Calu3 (cell line): ENCODE measurements at regions of chr17 and their contacts with region 1.

Region 1: GRCh38 chr17:41548844-41549595 is 20.9 kb upstream of the KRT19 start:
- DNase-seq: peak; percentile 99
- H3K4me3 Mint-ChIP-seq: peak overlapping the region; percentile 62
- H3K27ac Mint-ChIP-seq: peak overlapping the region; percentile 92
- H3K4me1 Mint-ChIP-seq: peaks cover 91% of the 10 kb centered on the region
- H3K27me3 Mint-ChIP-seq: no peaks in the 10 kb centered on the region
- CTCF ChIP-seq: peak; percentile 98

Region 2: DNA sequence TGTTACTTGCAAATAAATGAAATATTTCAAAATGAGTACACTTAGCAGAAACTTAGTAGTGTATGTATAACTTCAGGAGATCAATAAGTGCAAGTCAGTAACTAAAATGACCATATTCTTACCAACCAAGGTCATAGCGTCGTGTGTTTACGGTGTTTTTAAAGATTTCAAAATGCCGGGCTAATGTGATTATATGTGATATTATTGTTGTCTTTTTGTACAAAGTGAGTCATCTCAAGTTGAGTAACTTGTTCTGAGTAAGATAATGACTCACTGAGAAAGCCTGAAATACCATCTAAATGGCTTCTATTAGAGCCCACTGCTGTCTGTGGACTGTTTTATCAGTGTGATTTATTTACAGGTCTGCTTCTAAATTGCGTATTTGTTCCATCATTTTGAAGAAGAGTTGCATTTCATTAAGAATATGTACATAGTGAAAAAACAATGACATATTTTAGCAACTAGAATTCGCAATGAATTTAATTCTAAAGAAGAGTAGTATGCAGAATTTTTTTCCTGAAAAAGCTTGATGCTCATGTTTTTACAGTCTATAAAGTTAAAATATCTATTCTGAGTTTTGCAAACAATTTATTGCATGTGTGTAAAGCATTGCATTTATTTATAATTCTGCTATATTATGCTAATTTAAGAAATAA is 694.7 kb before region 1 on chr17:
- CTCF ChIA-PET with region 1: interaction called, 46 read pairs
- intact Hi-C with region 1: loop called (anchors 2 kb)
- DNase-seq: no peak
- H3K4me3 Mint-ChIP-seq: peak overlapping the region; percentile 33
- H3K27ac Mint-ChIP-seq: peak overlapping the region; percentile 86
- H3K4me1 Mint-ChIP-seq: peaks cover 85% of the 10 kb centered on the region
- H3K27me3 Mint-ChIP-seq: no peaks in the 10 kb centered on the region
- CTCF ChIP-seq: no peak

Region 3: GRCh38 chr17:41060052-41060604 is 488.9 kb before region 1 on chr17 and contains the start of gene KRTAP2-3:
- CTCF ChIA-PET with region 1: interaction called, 12 read pairs
- intact Hi-C with region 1: no loop called
- DNase-seq: peak; percentile 90
- H3K4me3 Mint-ChIP-seq: peak within 1 kb of the TSS; percentile 33
- H3K27ac Mint-ChIP-seq: peak within 1 kb of the TSS; percentile 88
- H3K4me1 Mint-ChIP-seq: peaks cover 54% of the 10 kb centered on the region
- H3K27me3 Mint-ChIP-seq: no peaks in the 10 kb centered on the region
- CTCF ChIP-seq: no peak
- total RNA-seq, gene KRTAP2-3: 9.4 and 18.2 TPM in 2 replicates

Region 4: GRCh38 chr17:41456208-41456607 is 92.8 kb before region 1 on chr17:
- CTCF ChIA-PET with region 1: interaction called, 12 read pairs
- intact Hi-C with region 1: no loop called
- DNase-seq: peak; percentile 56
- H3K4me3 Mint-ChIP-seq: no peak overlapping the region
- H3K27ac Mint-ChIP-seq: no peak overlapping the region
- H3K4me1 Mint-ChIP-seq: no peaks in the 10 kb centered on the region
- H3K27me3 Mint-ChIP-seq: no peaks in the 10 kb centered on the region
- CTCF ChIP-seq: peak; percentile 41

Region 5: DNA sequence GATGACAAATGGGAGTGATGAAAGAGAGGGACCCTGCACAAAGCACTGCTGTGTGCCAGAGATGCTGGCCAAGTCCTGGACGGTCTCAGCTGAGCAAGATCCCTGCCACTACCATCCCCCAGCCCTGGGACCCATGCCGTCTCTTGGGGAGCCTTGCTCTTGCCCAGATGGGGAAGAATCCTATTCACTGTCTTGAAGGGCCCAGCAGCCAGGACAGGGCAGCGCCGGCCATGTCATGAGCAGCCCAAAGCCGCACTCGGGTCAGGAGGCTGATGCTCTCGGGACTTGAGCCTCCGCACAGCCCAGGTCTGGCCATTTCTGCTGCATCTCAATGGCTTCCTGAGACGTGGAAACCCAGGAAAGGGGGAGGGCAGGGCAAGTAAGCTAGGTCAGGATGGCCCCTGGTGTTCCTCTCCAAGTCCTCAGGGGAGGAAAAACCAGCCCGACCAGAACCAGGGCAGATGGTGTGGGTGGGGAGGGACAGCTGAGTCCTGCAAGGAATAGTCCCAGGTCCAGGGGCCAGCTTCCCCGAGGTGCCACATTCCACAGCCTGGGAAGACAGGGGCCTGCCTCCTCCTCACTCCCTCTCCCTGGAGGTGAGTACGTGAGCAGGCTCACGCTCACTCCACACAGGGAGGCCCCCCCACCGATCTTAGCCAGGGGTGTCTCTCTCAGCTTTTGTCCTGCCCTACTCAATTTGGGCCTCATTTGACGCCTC is 13.1 kb before region 1 on chr17:
- CTCF ChIA-PET with region 1: interaction called, 471 read pairs
- intact Hi-C with region 1: loop called (anchors 2 kb)
- DNase-seq: peak; percentile 74
- H3K4me3 Mint-ChIP-seq: no peak overlapping the region
- H3K27ac Mint-ChIP-seq: peak overlapping the region; percentile 50
- H3K4me1 Mint-ChIP-seq: peaks cover 88% of the 10 kb centered on the region
- H3K27me3 Mint-ChIP-seq: no peaks in the 10 kb centered on the region
- CTCF ChIP-seq: no peak

Region 6: GRCh38 chr17:41585301-41586056 is 36.5 kb after region 1 on chr17:
- CTCF ChIA-PET with region 1: interaction called, 13 read pairs
- intact Hi-C with region 1: no loop called
- DNase-seq: no peak
- H3K4me3 Mint-ChIP-seq: no peak overlapping the region
- H3K27ac Mint-ChIP-seq: no peak overlapping the region
- H3K4me1 Mint-ChIP-seq: peaks cover 27% of the 10 kb centered on the region
- H3K27me3 Mint-ChIP-seq: peaks cover 15% of the 10 kb centered on the region
- CTCF ChIP-seq: no peak

Region 7: DNA sequence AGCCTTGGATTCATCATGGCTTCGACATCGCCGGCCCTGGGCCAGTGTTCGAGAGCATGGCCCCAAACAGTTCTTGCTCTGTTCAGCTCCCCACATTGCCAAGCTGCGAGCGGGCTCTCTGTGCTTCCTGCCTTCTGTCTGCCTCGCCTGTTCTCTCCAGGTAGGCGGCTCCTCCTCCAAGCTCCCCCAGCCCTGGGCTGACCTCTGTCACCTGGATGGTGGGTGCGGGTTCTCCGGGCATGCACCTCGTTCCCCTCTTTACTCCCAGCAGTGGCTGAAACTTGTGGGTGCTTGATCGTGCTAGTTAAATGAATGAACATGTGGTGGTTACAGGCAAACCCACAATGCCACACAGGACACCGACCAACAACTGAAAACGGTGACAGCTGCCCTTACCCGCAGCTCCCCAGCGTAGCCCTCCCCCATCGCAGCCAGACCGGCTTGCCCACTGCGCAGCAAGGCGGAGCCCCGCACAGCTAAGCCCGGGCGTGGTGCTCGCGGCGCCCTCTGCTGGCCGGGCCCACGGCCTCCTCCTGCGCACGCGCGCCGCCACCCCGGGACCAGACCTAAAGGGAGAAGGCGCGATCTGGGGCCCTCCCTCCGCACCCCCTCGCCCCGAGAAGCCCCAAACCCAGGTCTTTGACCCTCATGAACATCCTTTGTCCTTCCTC is 116.7 kb after region 1 on chr17:
- CTCF ChIA-PET with region 1: interaction called, 226 read pairs
- intact Hi-C with region 1: loop called (anchors 1 kb)
- DNase-seq: peak; percentile 99
- H3K4me3 Mint-ChIP-seq: peak overlapping the region; percentile 77
- H3K27ac Mint-ChIP-seq: peak overlapping the region; percentile 95
- H3K4me1 Mint-ChIP-seq: peaks cover 65% of the 10 kb centered on the region
- H3K27me3 Mint-ChIP-seq: no peaks in the 10 kb centered on the region
- CTCF ChIP-seq: peak; percentile 94